Mammary epithelial cell (primary cell): ENCODE measurements at regions of chr2 and their contacts with region 1.

Region 1: GRCh38 chr2:216315789-216316603 is 56.3 kb downstream of the MARCHF4 start:
- DNase-seq: peak; percentile 71
- H3K4me3 ChIP-seq: no peak overlapping the region
- H3K27ac ChIP-seq: no peak overlapping the region
- H3K4me1 ChIP-seq: peaks cover 7% of the 10 kb centered on the region
- H3K27me3 ChIP-seq: peaks cover 1% of the 10 kb centered on the region
- CTCF ChIP-seq: no peak

Region 2: GRCh38 chr2:216034065-216034464 is 281.9 kb before region 1 on chr2:
- CTCF ChIA-PET with region 1: no interaction called
- dilution Hi-C with region 1: no loop called
- in situ Hi-C with region 1: no loop called
- intact Hi-C with region 1: no loop called
- DNase-seq: peak; percentile 46
- H3K4me3 ChIP-seq: no peak overlapping the region
- H3K27ac ChIP-seq: no peak overlapping the region
- H3K4me1 ChIP-seq: peaks cover 5% of the 10 kb centered on the region
- H3K27me3 ChIP-seq: no peaks in the 10 kb centered on the region
- CTCF ChIP-seq: peak; percentile 90 to 95

Region 3: GRCh38 chr2:216498418-216499413 is 182.7 kb after region 1 on chr2 and contains the start of gene RPL37A:
- CTCF ChIA-PET with region 1: no interaction called
- dilution Hi-C with region 1: no loop called
- in situ Hi-C with region 1: no loop called
- intact Hi-C with region 1: loop called (anchors 10 kb)
- DNase-seq: peak; percentile 93
- H3K4me3 ChIP-seq: peak within 1 kb of the TSS; percentile 73 to 98 (median 96)
- H3K27ac ChIP-seq: peak within 1 kb of the TSS; percentile 95
- H3K4me1 ChIP-seq: peaks cover 34% of the 10 kb centered on the region
- H3K27me3 ChIP-seq: no peaks in the 10 kb centered on the region
- CTCF ChIP-seq: no peak
- total RNA-seq, gene RPL37A: 855 to 2,728 TPM